H1 (cell line): ENCODE measurements at regions of chr17 and their contacts with region 1.

Region 1: DNA sequence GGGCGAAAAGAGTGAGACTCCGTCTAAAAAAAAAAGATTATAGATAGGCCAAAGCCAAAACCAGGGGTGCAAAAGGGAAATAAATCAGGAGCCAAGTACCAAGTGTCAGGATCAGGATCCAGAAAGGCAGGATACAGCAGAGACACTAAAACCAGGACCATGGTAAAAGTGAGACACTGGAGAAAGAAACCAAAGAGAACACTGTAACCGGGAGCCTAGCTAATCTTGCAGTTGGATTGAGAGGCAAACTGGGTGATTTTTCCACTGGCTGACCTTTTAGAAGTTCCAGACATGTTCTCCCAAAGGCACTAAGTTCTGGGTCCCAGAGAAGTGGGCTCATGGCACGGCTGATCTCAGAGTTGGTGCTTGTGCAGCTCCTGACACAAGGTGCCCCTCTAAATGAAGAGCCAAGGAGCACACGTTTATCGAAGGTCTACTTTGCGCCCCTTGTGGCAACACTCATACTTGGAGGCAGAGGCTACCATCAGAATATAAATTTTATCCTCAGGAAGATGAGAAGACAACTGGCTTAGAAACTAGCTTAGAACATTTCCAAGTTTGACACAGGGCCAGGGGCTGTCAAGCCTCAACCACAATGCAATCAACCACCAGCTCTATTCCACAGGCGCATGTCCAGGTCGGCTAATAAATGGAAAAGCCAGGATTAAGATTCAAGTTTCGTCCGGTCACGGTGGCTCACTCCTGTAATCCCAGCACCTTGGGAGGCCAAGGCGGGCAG is 27.5 kb upstream of the HELZ start:
- DNase-seq: peak in 1 of 2 experiments; percentile 62
- H3K4me3 ChIP-seq: no peak overlapping the region
- H3K27ac ChIP-seq: no peak overlapping the region
- H3K4me1 ChIP-seq: no peaks in the 10 kb centered on the region
- H3K27me3 ChIP-seq: no peaks in the 10 kb centered on the region
- CTCF ChIP-seq: peak; percentile 47 to 79 (median 58)
- EP300 ChIP-seq: no peak
- POLR2A ChIP-seq: no peak
- RAD21 ChIP-seq: peak; percentile 37 to 50

Region 2: DNA sequence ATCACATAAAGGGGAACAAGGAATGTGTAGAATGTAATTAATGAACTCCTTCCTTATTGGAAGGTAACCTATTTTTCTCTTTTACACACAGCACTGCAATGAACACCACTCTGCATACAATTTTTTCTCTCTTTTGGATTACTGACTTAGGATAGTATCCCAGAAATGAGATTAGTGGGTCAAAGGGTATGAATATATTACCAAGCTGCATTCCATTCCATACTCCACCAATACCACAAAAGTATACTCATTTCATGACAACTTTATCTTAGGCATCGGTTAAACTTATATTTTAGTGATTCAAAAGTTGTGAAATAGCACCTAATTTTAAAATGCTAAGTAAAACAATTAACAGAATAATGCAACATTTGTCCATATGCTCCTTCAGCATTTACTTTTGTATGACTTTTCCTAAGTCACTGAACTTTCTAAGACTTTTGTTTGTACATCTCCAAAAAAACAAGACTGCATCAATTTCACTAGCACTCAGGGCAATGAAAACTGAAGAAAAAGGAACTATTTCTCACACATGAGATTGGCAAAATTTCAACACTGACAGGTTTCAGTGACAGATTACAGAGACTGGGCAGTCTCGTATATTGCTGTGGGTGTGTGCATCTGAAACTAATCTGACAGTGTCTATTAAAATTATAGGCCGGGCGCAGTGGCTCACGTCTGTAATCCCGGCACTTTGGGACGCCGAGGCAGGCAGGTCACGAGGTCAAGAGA is 59.6 kb before region 1 on chr17:
- CTCF ChIA-PET with region 1: no interaction called
- POLR2A ChIA-PET with region 1: no interaction called
- DNase-seq: no peak
- H3K4me3 ChIP-seq: no peak overlapping the region
- H3K27ac ChIP-seq: no peak overlapping the region; the same call in 1 of the 2 replicates
- H3K4me1 ChIP-seq: no peaks in the 10 kb centered on the region
- H3K27me3 ChIP-seq: no peaks in the 10 kb centered on the region
- CTCF ChIP-seq: no peak
- EP300 ChIP-seq: no peak
- POLR2A ChIP-seq: no peak
- RAD21 ChIP-seq: no peak

Region 3: DNA sequence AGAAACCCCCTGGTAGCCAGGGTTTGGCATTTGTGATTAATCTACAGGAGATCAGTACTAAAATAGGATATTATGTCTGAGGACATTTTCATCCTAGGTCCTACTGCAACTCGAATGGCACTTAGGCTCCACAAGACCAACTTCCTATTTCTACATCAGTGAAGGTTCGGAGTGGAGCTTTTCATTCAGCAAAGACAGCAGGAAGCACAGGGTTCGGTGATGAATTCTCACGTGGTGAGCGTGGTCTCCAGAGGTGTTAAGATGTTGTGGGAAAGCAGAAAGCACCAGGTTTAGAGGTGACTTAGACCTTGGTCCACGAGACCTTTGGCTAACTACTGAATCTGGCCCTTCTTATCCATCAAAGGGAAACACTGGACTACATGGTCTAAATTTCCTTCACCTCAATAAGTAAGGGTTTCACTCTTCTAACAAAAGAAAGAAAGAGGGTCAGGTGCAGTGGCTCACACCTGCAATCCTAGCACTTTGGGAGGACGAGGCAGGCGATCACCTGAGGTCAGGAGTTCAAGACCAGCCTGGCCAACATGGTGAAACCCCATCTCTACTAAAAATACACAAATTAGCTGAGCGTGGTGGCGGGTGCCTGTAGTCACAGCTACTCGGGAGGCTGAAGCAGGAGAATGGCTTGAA is 13.5 kb before region 1 on chr17:
- CTCF ChIA-PET with region 1: interaction called, 19 read pairs
- POLR2A ChIA-PET with region 1: interaction called, 3 read pairs
- DNase-seq: no peak
- H3K4me3 ChIP-seq: no peak overlapping the region
- H3K27ac ChIP-seq: no peak overlapping the region
- H3K4me1 ChIP-seq: peaks cover 0 to 6% (median 4%) of the 10 kb centered on the region in 4 experiments; a peak in 3 of 7 replicates
- H3K27me3 ChIP-seq: no peaks in the 10 kb centered on the region
- CTCF ChIP-seq: no peak
- EP300 ChIP-seq: no peak
- POLR2A ChIP-seq: no peak
- RAD21 ChIP-seq: no peak